Activated CD4-positive, alpha-beta memory T cell treated with anti-CD3 and anti-CD28 coated beads, Interleukin-2, amount 10 ng/mL, durations not matched to agents 7 days and 5 days (primary cell): ENCODE measurements at regions of chr16 and their contacts with region 1.

Region 1: GRCh38 chr16:31713071-31713944 is 160.3 kb upstream of the ZNF267 start:
- DNase-seq: peak; percentile 93
- H3K4me3 Mint-ChIP-seq: peak overlapping the region; percentile 97
- H3K27ac Mint-ChIP-seq: peak overlapping the region; percentile 96
- H3K4me1 Mint-ChIP-seq: peaks cover 36% of the 10 kb centered on the region
- H3K27me3 Mint-ChIP-seq: no peaks in the 10 kb centered on the region

Region 2: DNA sequence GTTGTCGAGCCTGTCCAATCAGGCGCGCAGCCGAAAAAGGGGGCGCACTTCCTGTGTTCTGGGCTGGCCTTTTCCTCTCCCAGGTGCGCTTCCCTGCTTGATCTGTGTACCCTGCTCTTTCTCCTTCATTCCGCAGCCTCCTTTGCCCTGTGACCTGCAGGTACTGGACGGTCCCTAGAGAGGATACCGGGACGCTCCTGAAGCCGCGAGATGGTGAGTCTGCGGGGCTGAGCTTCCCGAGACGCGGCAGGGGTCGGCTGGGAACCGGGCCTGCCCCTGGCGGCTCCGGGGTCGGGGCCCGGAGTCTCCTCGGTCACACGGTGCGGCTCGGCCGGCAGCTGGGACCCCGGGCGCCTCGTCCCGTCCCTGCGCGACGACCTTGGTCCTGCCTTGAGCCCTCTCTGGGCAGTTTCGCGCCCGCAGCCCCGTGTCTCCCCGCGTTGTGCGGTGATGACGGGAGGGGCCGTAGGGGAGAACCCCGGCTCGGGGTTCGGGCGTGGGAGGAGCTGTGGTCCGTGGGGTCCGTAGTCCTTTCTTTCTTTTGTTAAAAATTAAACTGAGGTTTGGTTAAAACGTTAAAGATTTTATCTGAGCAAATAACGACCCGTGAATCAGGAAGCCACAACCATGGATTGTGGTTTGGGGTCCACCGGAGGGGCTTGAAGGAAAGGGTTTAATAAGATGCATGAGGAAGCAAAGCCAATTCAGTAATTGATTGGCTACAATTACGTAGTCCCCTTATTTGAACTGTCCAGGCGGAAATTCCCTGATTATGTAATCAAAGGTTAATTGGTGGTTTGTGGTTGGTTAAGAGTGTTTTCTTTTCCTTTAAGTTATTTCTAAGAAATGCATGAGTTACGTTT is 12.6 kb before region 1 on chr16:
- CTCF ChIA-PET with region 1: interaction called, 8 read pairs
- POLR2A ChIA-PET with region 1: interaction called, 138 read pairs
- DNase-seq: peak; percentile 77
- H3K4me3 Mint-ChIP-seq: peak overlapping the region; percentile 76
- H3K27ac Mint-ChIP-seq: peak overlapping the region; percentile 73
- H3K4me1 Mint-ChIP-seq: peaks cover 31% of the 10 kb centered on the region
- H3K27me3 Mint-ChIP-seq: peaks cover 2% of the 10 kb centered on the region